ENCODE measurements at regions of chr17 and their contacts with region 1.

Region 1: DNA sequence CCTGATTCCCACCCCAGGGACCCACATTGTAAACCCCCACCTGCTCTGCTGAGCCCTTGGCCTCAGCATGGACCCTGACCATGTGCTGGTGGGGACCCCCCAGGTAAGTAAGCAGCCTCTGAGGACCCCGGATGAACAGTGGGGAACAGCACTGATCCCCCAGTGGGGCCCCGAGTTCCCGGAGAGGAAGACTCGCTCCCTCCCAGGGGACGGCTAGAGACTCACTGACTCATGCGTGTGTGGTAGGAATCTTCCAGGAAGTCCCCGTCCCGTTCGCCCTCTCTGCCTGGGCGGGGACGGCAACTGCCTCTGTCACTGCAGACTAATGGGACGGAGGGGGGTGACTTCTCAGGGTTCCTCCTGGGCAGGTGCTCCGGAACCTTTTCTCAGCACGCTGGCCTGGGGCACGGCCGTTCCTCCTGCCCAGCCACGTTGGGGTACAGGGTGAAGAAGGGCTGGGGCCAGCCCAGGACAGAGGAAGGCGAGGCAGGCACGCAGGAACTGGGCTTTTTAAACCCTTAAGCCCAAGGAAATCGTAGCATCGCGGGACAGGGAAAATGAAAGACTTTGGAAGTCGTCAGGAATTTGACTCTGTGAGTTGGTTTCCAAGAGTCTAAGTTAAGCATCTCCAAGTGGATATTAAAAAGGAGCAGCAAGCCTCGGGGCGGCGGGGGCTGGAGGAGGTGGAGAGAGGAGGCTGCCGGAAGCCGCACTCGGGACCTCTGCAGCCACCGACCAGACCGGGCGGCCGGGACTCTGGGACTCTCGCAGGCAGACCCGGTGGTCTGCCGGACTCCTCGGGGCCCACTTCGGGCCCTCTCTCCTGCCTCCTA is 178.7 kb downstream of the SEC14L1 start:
- DNase-seq: peak in 1 of 2 donors; percentile 81
- ATAC-seq: peak; percentile 71 to 80 (median 75)
- H3K4me3 ChIP-seq: no peak overlapping the region
- H3K4me3 Mint-ChIP-seq: peak overlapping the region; percentile 21
- H3K27ac ChIP-seq: peak overlapping the region; percentile 1
- H3K27ac Mint-ChIP-seq: peak overlapping the region in 1 of 2 donors; percentile 81
- H3K4me1 ChIP-seq: peaks cover 63% of the 10 kb centered on the region
- H3K4me1 Mint-ChIP-seq: peaks cover 14 to 31% of the 10 kb centered on the region in 2 donors
- H3K27me3 ChIP-seq: no peaks in the 10 kb centered on the region
- H3K27me3 Mint-ChIP-seq: no peaks in the 10 kb centered on the region
- CTCF ChIP-seq: no peak

Region 2: GRCh38 chr17:77566151-77566550 is 246.7 kb after region 1 on chr17:
- intact Hi-C with region 1: no loop called
- DNase-seq: no peak
- ATAC-seq: no peak
- H3K4me3 ChIP-seq: no peak overlapping the region
- H3K4me3 Mint-ChIP-seq: no peak overlapping the region
- H3K27ac ChIP-seq: no peak overlapping the region
- H3K27ac Mint-ChIP-seq: no peak overlapping the region
- H3K4me1 ChIP-seq: peaks cover 5% of the 10 kb centered on the region
- H3K4me1 Mint-ChIP-seq: no peaks in the 10 kb centered on the region
- H3K27me3 ChIP-seq: peaks cover 6% of the 10 kb centered on the region
- H3K27me3 Mint-ChIP-seq: peaks cover 0 to 2% of the 10 kb centered on the region in 2 donors
- CTCF ChIP-seq: no peak

Region 3: GRCh38 chr17:77666881-77667395 is 347.5 kb after region 1 on chr17:
- intact Hi-C with region 1: loop called (anchors 10 kb)
- DNase-seq: peak; percentile 53 to 91
- ATAC-seq: peak; percentile 87 to 94 (median 91)
- H3K4me3 ChIP-seq: peak overlapping the region; percentile 42
- H3K4me3 Mint-ChIP-seq: peak overlapping the region; percentile 97
- H3K27ac ChIP-seq: peak overlapping the region; percentile 83
- H3K27ac Mint-ChIP-seq: peak overlapping the region; percentile 93 to 95
- H3K4me1 ChIP-seq: peaks cover 18% of the 10 kb centered on the region
- H3K4me1 Mint-ChIP-seq: peaks cover 35 to 38% of the 10 kb centered on the region in 2 donors
- H3K27me3 ChIP-seq: no peaks in the 10 kb centered on the region
- H3K27me3 Mint-ChIP-seq: no peaks in the 10 kb centered on the region
- CTCF ChIP-seq: no peak